GM10248 (cell line): ENCODE measurements at regions of chr1 and their contacts with region 1.

Region 1: GRCh38 chr1:182781841-182782586 is 7.6 kb upstream of the NPL start:
- DNase-seq: peak; percentile 59
- CTCF ChIP-seq: peak; percentile 87

Region 2: DNA sequence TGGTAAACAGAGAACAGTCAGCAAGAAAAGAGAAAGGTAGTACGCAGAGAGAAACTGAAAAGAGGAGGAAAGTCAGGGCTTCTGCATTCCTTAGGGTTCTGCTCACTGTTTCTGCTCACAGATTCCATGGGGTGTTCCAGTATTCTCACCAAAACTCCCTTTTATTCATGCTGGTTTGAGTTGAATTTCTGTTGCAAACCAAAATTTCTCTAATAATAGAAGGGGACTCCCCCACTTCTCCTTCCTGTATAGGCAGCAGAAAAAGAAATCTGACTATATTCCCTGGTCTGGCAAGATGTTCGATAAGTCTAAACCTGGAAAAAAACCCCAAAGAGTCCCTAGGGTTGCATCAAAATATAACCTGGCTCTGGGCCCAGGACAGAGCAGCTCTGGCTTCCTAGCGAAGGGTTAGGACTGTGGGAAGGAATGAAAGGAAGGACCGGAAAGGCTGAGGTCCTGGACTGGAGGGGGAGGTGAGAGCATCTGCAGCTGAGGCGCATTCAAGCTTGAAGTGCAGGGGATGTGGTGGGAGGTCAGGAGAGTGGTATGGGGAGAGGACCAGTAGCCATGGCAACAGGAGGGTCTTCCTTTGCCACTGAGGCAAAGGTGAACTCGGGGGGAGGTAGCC is 159.0 kb before region 1 on chr1:
- CTCF ChIA-PET with region 1: interaction called, 1,252 read pairs
- POLR2A ChIA-PET with region 1: no interaction called
- DNase-seq: no peak
- CTCF ChIP-seq: no peak

Region 3: DNA sequence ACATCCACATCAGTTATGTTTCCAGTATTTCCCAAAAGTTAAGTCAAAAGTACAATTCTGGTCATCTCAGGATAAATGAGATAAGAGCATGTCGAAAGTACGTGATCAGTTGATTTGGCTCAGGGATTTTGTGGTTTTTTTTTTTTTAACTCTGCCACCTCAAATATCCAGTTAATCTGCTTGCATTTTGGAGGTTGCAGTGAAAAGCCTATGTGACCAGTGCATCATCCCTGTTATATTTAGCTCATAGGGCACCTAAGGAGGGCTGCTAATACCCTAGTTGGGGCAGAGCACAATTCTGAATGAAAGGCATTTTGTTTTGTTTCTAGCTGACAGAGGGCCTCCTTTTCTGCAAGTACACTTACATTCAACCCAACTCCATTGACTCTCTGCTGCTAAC is 146.1 kb before region 1 on chr1:
- CTCF ChIA-PET with region 1: interaction called, 14 read pairs
- POLR2A ChIA-PET with region 1: no interaction called
- DNase-seq: no peak
- CTCF ChIP-seq: no peak

Region 4: GRCh38 chr1:182649041-182649440 is 133.0 kb before region 1 on chr1:
- CTCF ChIA-PET with region 1: interaction called, 18 read pairs
- POLR2A ChIA-PET with region 1: interaction called, 3 read pairs
- DNase-seq: peak; percentile 37
- CTCF ChIP-seq: no peak

Region 5: DNA sequence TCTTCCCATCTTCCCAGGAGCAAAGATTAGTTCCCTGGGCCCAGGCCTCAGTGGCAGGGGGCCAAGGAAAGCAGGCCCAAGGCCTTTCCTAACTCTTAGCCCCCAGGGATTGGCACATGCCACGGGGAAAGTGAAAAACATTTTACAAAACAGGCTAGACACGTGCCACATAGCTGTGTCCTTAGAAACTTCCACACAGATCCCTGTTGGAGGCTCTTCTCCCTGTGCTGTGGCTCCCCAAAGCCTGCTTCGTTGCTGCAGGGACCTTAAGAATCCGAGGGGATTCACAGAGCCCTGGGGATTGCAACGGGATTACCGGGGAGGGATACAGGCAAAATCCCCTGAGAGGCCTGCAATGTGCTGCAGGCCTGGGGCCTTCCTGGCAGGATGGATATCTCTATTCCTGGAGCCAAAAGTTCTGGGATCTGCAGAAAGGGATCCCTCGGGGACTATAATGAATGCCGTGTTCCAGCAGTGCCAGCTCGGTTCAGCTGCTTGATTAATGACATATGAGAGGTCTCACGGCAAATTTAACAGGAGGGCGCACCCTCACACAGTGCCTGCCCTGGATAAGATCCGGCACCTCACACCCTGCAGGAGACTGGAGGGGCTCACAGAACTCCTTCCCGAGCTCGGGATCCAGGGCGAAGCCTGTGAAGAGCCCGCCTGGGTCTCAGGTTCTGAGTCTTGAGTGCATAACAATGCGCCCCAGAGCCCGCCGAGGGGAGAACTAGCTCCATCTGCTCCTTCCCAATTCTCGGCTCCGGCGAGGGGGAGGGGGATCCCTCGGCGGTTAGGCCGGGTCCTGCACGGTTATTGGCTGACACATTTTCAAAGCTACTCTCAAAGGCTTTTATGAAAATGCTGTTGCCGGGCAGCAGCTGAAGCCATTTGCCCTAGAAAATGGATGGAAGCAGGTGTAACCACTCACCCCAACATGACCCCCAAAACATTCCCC is 82.3 kb before region 1 on chr1:
- CTCF ChIA-PET with region 1: interaction called, 10 read pairs
- POLR2A ChIA-PET with region 1: no interaction called
- DNase-seq: no peak
- CTCF ChIP-seq: no peak

Region 6: GRCh38 chr1:182795563-182796228 is 13.7 kb after region 1 on chr1:
- CTCF ChIA-PET with region 1: interaction called, 74 read pairs
- POLR2A ChIA-PET with region 1: no interaction called
- DNase-seq: no peak
- CTCF ChIP-seq: no peak

Region 7: DNA sequence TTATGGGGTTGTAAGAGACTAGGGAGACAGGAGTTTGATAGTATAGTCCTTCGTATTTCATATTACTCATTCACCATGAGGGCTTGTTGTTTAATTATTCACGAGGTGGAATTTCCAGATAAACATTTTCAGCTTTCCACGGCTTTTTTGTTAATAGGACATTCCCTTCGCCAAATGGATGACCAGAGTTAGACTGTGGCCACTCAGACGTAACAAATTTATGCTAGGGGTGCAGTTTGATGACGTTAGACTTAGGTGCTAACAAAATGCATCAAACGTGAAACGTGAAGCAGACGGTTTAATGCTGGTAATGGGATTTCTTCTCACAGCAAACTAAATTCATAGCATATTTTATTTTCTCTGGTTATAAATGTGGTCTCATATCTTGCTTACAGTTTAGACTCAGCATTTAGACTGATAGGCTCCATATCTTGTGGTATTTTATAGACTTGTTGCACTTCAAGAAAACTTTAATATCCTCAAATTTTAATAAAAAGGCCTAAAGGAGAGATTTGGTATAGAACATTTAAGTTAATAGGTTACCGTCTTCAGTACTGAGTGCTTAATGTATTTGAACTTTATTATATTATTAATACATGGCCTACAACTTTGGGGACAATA is 59.5 kb after region 1 on chr1:
- CTCF ChIA-PET with region 1: no interaction called
- POLR2A ChIA-PET with region 1: no interaction called
- DNase-seq: peak; percentile 33
- CTCF ChIP-seq: no peak